Endothelial cell of umbilical vein (primary cell): ENCODE measurements at regions of chr19 and their contacts with region 1.

Region 1: GRCh38 chr19:37551129-37551993 is 43.2 kb downstream of the ZNF571 start:
- DNase-seq: peak; percentile 57
- H3K4me3 ChIP-seq: peak overlapping the region; percentile 28 to 74 (median 64)
- H3K27ac ChIP-seq: peak overlapping the region; percentile 61
- H3K4me1 ChIP-seq: no peaks in the 10 kb centered on the region
- H3K27me3 ChIP-seq: no peaks in the 10 kb centered on the region
- CTCF ChIP-seq: peak; percentile 56 to 57
- POLR2A ChIP-seq: no peak

Region 2: DNA sequence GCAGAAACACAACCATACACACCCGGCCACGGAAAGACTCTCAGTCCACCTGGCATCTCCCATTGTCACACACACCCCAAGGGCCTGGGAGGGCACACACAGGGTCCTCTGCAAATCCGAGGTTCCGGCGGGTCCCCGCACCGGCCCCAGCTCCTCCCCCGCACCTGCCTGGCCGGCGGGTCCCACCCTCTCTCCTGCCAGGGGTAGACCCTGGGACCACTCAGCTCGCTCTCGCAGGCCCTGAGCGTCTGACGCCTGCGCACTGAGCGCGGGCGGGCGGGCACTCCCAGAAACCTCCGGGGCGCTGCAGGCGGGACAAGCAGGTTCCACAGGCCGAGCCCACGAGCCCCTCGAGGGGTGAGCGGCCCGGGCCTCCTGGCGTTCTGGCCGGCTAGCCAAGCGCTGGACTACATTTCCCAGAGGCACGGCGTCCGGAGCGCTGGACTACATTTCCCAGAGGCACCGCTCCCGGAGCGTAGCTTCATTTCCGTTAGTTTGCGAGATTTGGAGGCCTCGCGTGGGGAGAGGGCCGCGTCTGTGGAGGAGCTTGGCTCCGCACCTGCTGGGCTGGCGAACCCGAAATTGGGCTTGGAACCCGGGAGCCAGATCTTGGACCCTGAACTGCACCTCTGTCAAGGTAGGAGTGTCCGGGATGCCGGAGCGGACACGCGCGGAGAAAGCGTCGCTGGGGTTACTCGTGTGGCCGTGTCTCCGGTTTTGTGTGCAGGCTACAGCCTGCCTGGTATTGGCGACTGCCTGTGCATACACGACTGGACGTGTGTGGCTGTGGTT is 473.2 kb before region 1 on chr19 and contains the start of gene ZNF420:
- CTCF ChIA-PET with region 1: interaction called, 3 read pairs
- POLR2A ChIA-PET with region 1: no interaction called
- dilution Hi-C with region 1: no loop called
- intact Hi-C with region 1: loop called (anchors 1 kb)
- DNase-seq: peak; percentile 94
- H3K4me3 ChIP-seq: peak within 1 kb of the TSS; percentile 66 to 80 (median 77)
- H3K27ac ChIP-seq: peak within 1 kb of the TSS; percentile 28
- H3K4me1 ChIP-seq: peaks cover 9% of the 10 kb centered on the region
- H3K27me3 ChIP-seq: no peaks in the 10 kb centered on the region
- CTCF ChIP-seq: no peak
- POLR2A ChIP-seq: peak; percentile 64
- total RNA-seq, gene ZNF420: 4.2 and 5.3 TPM in 2 replicates

Region 3: GRCh38 chr19:37594304-37594981 is 43.1 kb after region 1 on chr19 and contains the starts of genes ZNF540 and ZNF571:
- CTCF ChIA-PET with region 1: interaction called, 5 read pairs
- POLR2A ChIA-PET with region 1: no interaction called
- dilution Hi-C with region 1: no loop called
- intact Hi-C with region 1: loop called (anchors 2 kb)
- DNase-seq: peak; percentile 94
- H3K4me3 ChIP-seq: peak within 1 kb of the TSS; percentile 65 to 81 (median 73)
- H3K27ac ChIP-seq: no peak within 1 kb of the TSS
- H3K4me1 ChIP-seq: peaks cover 10% of the 10 kb centered on the region
- H3K27me3 ChIP-seq: no peaks in the 10 kb centered on the region
- CTCF ChIP-seq: no peak
- POLR2A ChIP-seq: peak; percentile 17
- total RNA-seq, gene ZNF540: 0.75 and 0.83 TPM in 2 replicates
- total RNA-seq, gene ZNF571: 2.0 and 2.1 TPM in 2 replicates